PC-3 (cell line): ENCODE measurements at regions of chr17 and their contacts with region 1.

Region 1: GRCh38 chr17:43024407-43025289 is at the start of gene RND2:
- DNase-seq: peak; percentile 85
- ATAC-seq: peak; percentile 65
- H3K4me3 ChIP-seq: peak within 1 kb of the TSS; percentile 61
- H3K27ac ChIP-seq: no peak within 1 kb of the TSS
- H3K4me1 ChIP-seq: peaks cover 5% of the 10 kb centered on the region
- H3K27me3 ChIP-seq: no peaks in the 10 kb centered on the region
- CTCF ChIP-seq: peak; percentile 63
- total RNA-seq, gene RND2: 0.12 and 0.29 TPM in 2 replicates

Region 2: GRCh38 chr17:42518072-42518754 is 506.4 kb before region 1 on chr17:
- CTCF ChIA-PET with region 1: interaction called, 19 read pairs
- POLR2A ChIA-PET with region 1: no interaction called
- intact Hi-C with region 1: no loop called
- DNase-seq: peak; percentile 89
- ATAC-seq: peak; percentile 51
- H3K4me3 ChIP-seq: no peak overlapping the region
- H3K27ac ChIP-seq: no peak overlapping the region
- H3K4me1 ChIP-seq: peaks cover 30% of the 10 kb centered on the region
- H3K27me3 ChIP-seq: no peaks in the 10 kb centered on the region
- CTCF ChIP-seq: no peak

Region 3: GRCh38 chr17:43125133-43125966 is 100.7 kb after region 1 on chr17 and contains the start of gene BRCA1:
- CTCF ChIA-PET with region 1: interaction called, 5 read pairs
- POLR2A ChIA-PET with region 1: no interaction called
- intact Hi-C with region 1: loop called (anchors 5 kb)
- DNase-seq: peak; percentile 98
- ATAC-seq: peak; percentile 98
- H3K4me3 ChIP-seq: peak within 1 kb of the TSS; percentile 83
- H3K27ac ChIP-seq: peak within 1 kb of the TSS; percentile 71
- H3K4me1 ChIP-seq: no peaks in the 10 kb centered on the region; the same call in 1 of the 2 replicates
- H3K27me3 ChIP-seq: no peaks in the 10 kb centered on the region
- CTCF ChIP-seq: no peak
- total RNA-seq, gene BRCA1: 31.8 and 36.3 TPM in 2 replicates